PC-3 (cell line): ENCODE measurements at regions of chr1 and their contacts with region 1.

Region 1: GRCh38 chr1:207188901-207189300 is 84.9 kb downstream of the C4BPA start:
- DNase-seq: no peak
- ATAC-seq: no peak
- H3K4me3 ChIP-seq: no peak overlapping the region
- H3K27ac ChIP-seq: no peak overlapping the region
- H3K4me1 ChIP-seq: no peaks in the 10 kb centered on the region
- H3K27me3 ChIP-seq: no peaks in the 10 kb centered on the region
- CTCF ChIP-seq: no peak

Region 2: GRCh38 chr1:207282058-207282457 is 93.2 kb after region 1 on chr1:
- CTCF ChIA-PET with region 1: no interaction called
- POLR2A ChIA-PET with region 1: no interaction called
- intact Hi-C with region 1: no loop called
- DNase-seq: peak; percentile 85
- ATAC-seq: peak; percentile 86
- H3K4me3 ChIP-seq: no peak overlapping the region
- H3K27ac ChIP-seq: peak overlapping the region; percentile 68
- H3K4me1 ChIP-seq: peaks cover 21% of the 10 kb centered on the region
- H3K27me3 ChIP-seq: no peaks in the 10 kb centered on the region
- CTCF ChIP-seq: no peak

Region 3: GRCh38 chr1:207352554-207352953 is 163.7 kb after region 1 on chr1:
- CTCF ChIA-PET with region 1: no interaction called
- POLR2A ChIA-PET with region 1: interaction called, 31 read pairs
- intact Hi-C with region 1: no loop called
- DNase-seq: no peak
- ATAC-seq: peak; percentile 67
- H3K4me3 ChIP-seq: no peak overlapping the region
- H3K27ac ChIP-seq: no peak overlapping the region
- H3K4me1 ChIP-seq: peaks cover 6% of the 10 kb centered on the region
- H3K27me3 ChIP-seq: no peaks in the 10 kb centered on the region
- CTCF ChIP-seq: no peak